ENCODE measurements at regions of chr11 and their contacts with region 1.

Region 1: GRCh38 chr11:108467091-108467823 is at the start of gene C11orf65:
- DNase-seq: peak; percentile 97
- H3K4me3 Mint-ChIP-seq: peak within 1 kb of the TSS; percentile 99
- H3K27ac Mint-ChIP-seq: peak within 1 kb of the TSS; percentile 99
- H3K4me1 Mint-ChIP-seq: peaks cover 3% of the 10 kb centered on the region
- H3K27me3 Mint-ChIP-seq: no peaks in the 10 kb centered on the region
- total RNA-seq, gene C11orf65: 1.0 to 2.0 TPM

Region 2: GRCh38 chr11:108008656-108009496 is 458.4 kb before region 1 on chr11 and contains the start of gene CUL5:
- CTCF ChIA-PET with region 1: no interaction called
- POLR2A ChIA-PET with region 1: no interaction called
- intact Hi-C with region 1: loop called (anchors 1 kb)
- DNase-seq: peak; percentile 94
- H3K4me3 Mint-ChIP-seq: peak within 1 kb of the TSS; percentile 93
- H3K27ac Mint-ChIP-seq: peak within 1 kb of the TSS; percentile 93
- H3K4me1 Mint-ChIP-seq: peaks cover 17% of the 10 kb centered on the region
- H3K27me3 Mint-ChIP-seq: no peaks in the 10 kb centered on the region
- total RNA-seq, gene CUL5: 27.7 to 30.7 TPM

Region 3: GRCh38 chr11:108135845-108136544 is 331.3 kb before region 1 on chr11:
- CTCF ChIA-PET with region 1: no interaction called
- POLR2A ChIA-PET with region 1: no interaction called
- intact Hi-C with region 1: loop called (anchors 5 kb)
- DNase-seq: peak; percentile 55
- H3K4me3 Mint-ChIP-seq: no peak overlapping the region
- H3K27ac Mint-ChIP-seq: peak overlapping the region; percentile 68
- H3K4me1 Mint-ChIP-seq: peaks cover 24% of the 10 kb centered on the region
- H3K27me3 Mint-ChIP-seq: no peaks in the 10 kb centered on the region

Region 4: DNA sequence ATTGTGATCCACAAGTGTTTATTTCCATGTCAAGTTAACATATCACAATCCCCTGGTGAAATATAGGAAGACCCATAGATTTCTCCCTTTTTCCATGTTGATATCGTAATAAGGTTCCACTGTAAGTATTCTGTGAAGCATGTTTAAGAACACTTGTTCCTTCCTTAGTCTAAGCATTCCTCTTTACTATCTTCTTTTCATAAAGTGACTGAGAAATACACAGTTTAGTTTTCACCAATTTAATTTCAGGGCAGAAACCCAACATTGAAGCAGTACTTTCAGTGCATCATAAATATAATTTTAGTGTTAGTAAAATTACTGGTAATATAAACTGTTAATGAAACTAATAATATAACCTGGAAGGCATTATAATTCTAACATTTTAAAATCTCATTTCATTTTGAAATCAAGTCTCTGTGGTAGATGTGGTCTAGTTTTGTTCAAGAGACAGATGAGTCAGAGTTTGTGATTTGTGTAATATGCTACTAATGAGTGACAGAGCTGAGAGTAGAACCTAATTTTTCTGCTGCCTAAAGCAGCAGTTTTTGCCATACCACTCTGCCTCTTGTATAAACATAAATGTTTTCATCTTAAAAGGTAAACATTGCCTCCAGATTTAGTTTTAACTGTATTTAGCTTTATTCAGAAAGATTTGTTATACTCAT is 165.0 kb before region 1 on chr11:
- CTCF ChIA-PET with region 1: no interaction called
- POLR2A ChIA-PET with region 1: no interaction called
- intact Hi-C with region 1: loop called (anchors 5 kb)
- DNase-seq: no peak
- H3K4me3 Mint-ChIP-seq: no peak overlapping the region
- H3K27ac Mint-ChIP-seq: no peak overlapping the region
- H3K4me1 Mint-ChIP-seq: peaks cover 20% of the 10 kb centered on the region
- H3K27me3 Mint-ChIP-seq: no peaks in the 10 kb centered on the region

Region 5: DNA sequence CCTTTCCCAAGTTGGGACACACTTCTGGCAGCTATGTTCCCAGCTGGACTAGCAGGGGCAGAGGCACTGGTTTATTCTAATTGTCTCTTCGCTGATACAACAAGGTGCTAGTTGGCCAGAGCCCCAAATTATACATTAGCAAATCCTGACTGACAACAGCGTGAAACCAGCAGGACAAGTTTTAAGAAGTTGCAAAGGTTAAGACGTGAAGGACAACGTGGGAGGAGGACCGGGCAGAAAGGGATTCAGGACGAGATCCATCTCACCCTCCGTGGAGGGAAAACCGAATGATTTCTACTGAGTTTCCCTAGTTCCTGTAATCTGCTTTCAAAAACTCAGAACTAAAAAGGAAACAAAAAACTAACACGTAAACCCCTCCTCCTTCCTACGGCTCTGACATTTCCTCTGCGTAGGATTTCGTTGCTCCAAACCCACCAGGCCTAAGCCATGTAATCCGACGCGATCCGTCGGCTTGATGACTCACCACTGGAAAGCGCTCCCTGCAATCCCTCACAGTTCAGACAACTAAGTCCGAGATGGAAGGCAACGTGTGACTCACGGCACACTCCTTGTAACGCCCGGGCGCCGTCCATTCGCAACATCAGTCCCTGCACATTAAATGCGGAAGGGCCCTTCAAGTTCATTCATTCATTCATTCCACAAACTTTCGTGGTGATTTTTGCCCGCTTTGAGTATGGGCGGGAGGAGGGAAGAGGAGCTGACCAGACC is 30.2 kb after region 1 on chr11:
- CTCF ChIA-PET with region 1: no interaction called
- POLR2A ChIA-PET with region 1: interaction called, 4 read pairs
- intact Hi-C with region 1: loop called (anchors 1 kb)
- DNase-seq: peak; percentile 87
- H3K4me3 Mint-ChIP-seq: peak overlapping the region; percentile 95
- H3K27ac Mint-ChIP-seq: peak overlapping the region; percentile 99
- H3K4me1 Mint-ChIP-seq: peaks cover 16% of the 10 kb centered on the region
- H3K27me3 Mint-ChIP-seq: no peaks in the 10 kb centered on the region

Region 6: GRCh38 chr11:108620958-108621772 is 153.9 kb after region 1 on chr11:
- CTCF ChIA-PET with region 1: no interaction called
- POLR2A ChIA-PET with region 1: no interaction called
- intact Hi-C with region 1: loop called (anchors 1 kb)
- DNase-seq: no peak
- H3K4me3 Mint-ChIP-seq: no peak overlapping the region
- H3K27ac Mint-ChIP-seq: no peak overlapping the region
- H3K4me1 Mint-ChIP-seq: peaks cover 21% of the 10 kb centered on the region
- H3K27me3 Mint-ChIP-seq: peaks cover 20% of the 10 kb centered on the region

Region 7: GRCh38 chr11:108664730-108665525 is 197.7 kb after region 1 on chr11 and contains the start of gene DDX10:
- CTCF ChIA-PET with region 1: no interaction called
- POLR2A ChIA-PET with region 1: no interaction called
- intact Hi-C with region 1: loop called (anchors 5 kb)
- DNase-seq: peak; percentile 99
- H3K4me3 Mint-ChIP-seq: peak within 1 kb of the TSS; percentile 100
- H3K27ac Mint-ChIP-seq: peak within 1 kb of the TSS; percentile 80
- H3K4me1 Mint-ChIP-seq: peaks cover 44% of the 10 kb centered on the region
- H3K27me3 Mint-ChIP-seq: no peaks in the 10 kb centered on the region
- total RNA-seq, gene DDX10: 34.8 to 37.7 TPM

Measured in activated CD4-positive, alpha-beta memory T cell treated with anti-CD3 and anti-CD28 coated beads for 36 hours (primary cell).